ENCODE measurements at regions of chr6 and their contacts with region 1.

Region 1: GRCh38 chr6:63272397-63272796 is 47.4 kb downstream of the LGSN start:
- DNase-seq: no peak
- ATAC-seq: peak; percentile 59 to 74 (median 61)
- H3K4me3 ChIP-seq: no peak overlapping the region
- H3K27ac ChIP-seq: no peak overlapping the region
- H3K4me1 ChIP-seq: peaks cover 0 to 5% (median 0%) of the 10 kb centered on the region in 4 donors
- H3K27me3 ChIP-seq: no peaks in the 10 kb centered on the region
- CTCF ChIP-seq: peak; percentile 39 to 56 (median 48)
- POLR2A ChIP-seq: no peak

Region 2: DNA sequence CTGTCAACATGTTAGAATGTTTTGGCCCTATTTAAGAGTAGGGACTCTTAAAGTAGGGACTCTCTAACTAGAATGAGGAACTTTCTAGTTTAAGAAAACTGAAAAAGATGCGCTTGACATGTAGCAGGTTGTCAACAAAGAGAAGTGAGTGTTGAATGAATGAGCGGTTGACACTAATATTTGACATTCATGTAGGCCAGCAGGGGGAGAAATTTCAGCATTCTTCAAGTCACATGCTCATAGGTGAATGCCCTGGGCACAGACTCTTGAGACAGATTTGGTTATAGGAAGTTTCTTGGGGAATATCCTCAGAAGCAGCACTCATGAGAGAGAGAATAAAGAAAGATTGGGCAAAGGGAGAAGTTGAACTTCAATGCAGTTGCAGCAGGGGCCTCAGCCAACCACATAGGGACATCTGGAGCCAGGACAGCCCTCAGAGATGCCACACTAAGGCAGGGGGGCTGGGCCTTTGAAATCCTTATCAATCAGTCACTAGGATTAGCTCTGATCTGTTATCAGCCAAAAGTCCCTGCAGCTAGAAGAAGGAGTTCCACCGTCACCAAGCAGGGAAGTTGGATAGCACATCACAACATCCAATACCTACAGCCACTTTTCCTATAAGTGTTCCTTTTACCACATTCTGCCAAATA is 206.2 kb before region 1 on chr6:
- intact Hi-C with region 1: loop called in 1 of 2 experiments (anchors 10 kb)
- DNase-seq: no peak
- ATAC-seq: peak; percentile 64 to 75 (median 68)
- H3K4me3 ChIP-seq: no peak overlapping the region
- H3K27ac ChIP-seq: no peak overlapping the region
- H3K4me1 ChIP-seq: no peaks in the 10 kb centered on the region
- H3K27me3 ChIP-seq: no peaks in the 10 kb centered on the region
- CTCF ChIP-seq: peak; percentile 25 to 44 (median 42)
- POLR2A ChIP-seq: no peak

Region 3: GRCh38 chr6:63114610-63115211 is 157.7 kb before region 1 on chr6:
- intact Hi-C with region 1: no loop called
- DNase-seq: no peak
- ATAC-seq: no peak
- H3K4me3 ChIP-seq: no peak overlapping the region
- H3K27ac ChIP-seq: no peak overlapping the region
- H3K4me1 ChIP-seq: no peaks in the 10 kb centered on the region
- H3K27me3 ChIP-seq: no peaks in the 10 kb centered on the region
- CTCF ChIP-seq: no peak
- POLR2A ChIP-seq: no peak

Region 4: DNA sequence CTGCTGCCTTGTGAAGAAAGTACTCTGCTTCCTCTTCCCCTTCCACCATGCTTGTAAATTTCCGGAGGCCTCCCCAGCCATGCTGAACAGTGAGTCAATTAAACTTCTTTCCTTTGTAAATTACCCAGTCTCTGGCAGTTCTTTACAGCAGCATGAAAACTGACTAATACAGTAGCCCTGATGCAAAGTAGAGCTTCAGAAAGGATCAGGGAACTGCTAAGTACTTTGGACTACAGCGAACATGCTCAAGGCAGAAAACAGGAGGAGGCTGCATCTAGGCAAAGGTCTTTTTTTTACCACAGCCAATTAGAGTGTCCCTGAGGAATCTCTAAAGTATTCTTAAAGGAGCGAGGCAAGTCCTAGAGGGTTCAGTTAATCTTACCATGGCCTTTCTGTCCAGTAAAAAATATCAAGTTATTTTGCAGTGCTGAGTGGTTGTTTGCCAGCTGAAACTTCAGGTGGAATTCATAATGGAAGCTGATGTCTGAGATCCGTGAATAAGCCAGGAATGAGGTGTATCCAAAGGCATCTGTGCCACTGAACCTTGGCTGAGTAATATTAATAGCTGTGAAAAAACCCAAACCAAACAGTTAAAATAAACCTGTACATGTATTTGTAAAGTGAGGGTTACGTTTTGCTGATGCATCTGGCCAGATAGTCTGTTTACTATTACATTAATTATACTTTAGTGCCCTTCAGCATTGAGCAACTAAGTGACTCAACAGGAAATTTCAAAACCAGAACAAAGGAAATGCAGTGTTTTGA is 533.6 kb after region 1 on chr6:
- intact Hi-C with region 1: no loop called
- DNase-seq: no peak
- ATAC-seq: peak; percentile 83 to 89 (median 87)
- H3K4me3 ChIP-seq: peak overlapping the region; percentile 4 to 32 (median 17)
- H3K27ac ChIP-seq: peak overlapping the region; percentile 76 to 93 (median 79)
- H3K4me1 ChIP-seq: peaks cover 0 to 13% (median 2%) of the 10 kb centered on the region in 4 donors
- H3K27me3 ChIP-seq: no peaks in the 10 kb centered on the region
- CTCF ChIP-seq: no peak
- POLR2A ChIP-seq: peak; percentile 49